B cell (primary cell): ENCODE measurements at regions of chr16 and their contacts with region 1.

Region 1: GRCh38 chr16:30378236-30379204 is 3.8 kb downstream of the SEPTIN1 start:
- DNase-seq: peak; percentile 99
- ATAC-seq: peak; percentile 85
- H3K4me3 ChIP-seq: peak overlapping the region; percentile 42 to 87 (median 68)
- H3K4me3 Mint-ChIP-seq: peak overlapping the region; percentile 94
- H3K27ac ChIP-seq: peak overlapping the region; percentile 97 to 100
- H3K27ac Mint-ChIP-seq: peak overlapping the region; percentile 100
- H3K4me1 ChIP-seq: peaks cover 34 to 64% of the 10 kb centered on the region in 2 donors
- H3K4me1 Mint-ChIP-seq: peaks cover 50% of the 10 kb centered on the region
- H3K27me3 ChIP-seq: no peaks in the 10 kb centered on the region
- H3K27me3 Mint-ChIP-seq: no peaks in the 10 kb centered on the region
- CTCF ChIP-seq: no peak

Region 2: GRCh38 chr16:28524681-28525171 is 1853.8 kb before region 1 on chr16:
- CTCF ChIA-PET with region 1: no interaction called
- POLR2A ChIA-PET with region 1: interaction called, 10 read pairs
- intact Hi-C with region 1: no loop called
- DNase-seq: no peak
- ATAC-seq: no peak
- H3K4me3 ChIP-seq: no peak overlapping the region
- H3K4me3 Mint-ChIP-seq: no peak overlapping the region
- H3K27ac ChIP-seq: no peak overlapping the region
- H3K27ac Mint-ChIP-seq: no peak overlapping the region
- H3K4me1 ChIP-seq: no peaks in the 10 kb centered on the region
- H3K4me1 Mint-ChIP-seq: peaks cover 7% of the 10 kb centered on the region
- H3K27me3 ChIP-seq: no peaks in the 10 kb centered on the region
- H3K27me3 Mint-ChIP-seq: peaks cover 8% of the 10 kb centered on the region
- CTCF ChIP-seq: no peak

Region 3: DNA sequence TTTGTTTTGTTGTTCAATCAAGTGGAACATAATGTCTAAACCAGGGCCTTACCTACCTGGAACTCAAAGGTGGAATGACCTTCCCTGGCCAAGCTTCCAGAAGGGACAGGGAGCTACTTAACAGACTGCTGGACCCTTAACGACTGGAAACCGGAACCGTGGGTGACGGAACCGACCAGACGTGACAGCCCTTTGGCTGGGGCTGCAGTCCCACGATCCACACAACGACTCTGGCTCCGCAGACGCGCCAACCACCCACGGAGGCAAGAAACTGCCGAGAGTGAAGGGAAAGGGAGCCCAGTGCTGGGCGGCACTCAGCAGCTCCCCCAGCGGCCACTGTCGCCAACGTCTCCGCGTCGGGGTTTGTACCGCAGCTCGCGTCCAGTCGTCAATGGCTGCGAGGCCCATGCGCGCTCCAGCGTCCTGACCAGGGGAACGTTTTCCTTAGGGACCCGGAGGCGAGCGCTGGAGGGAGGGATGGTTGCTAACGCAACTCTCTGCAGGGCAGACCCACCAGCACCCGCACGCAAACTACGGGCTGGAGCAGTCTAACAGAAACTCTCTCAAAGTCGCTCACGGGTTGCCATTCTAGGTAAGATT is 593.5 kb before region 1 on chr16:
- CTCF ChIA-PET with region 1: no interaction called
- POLR2A ChIA-PET with region 1: no interaction called
- intact Hi-C with region 1: no loop called
- DNase-seq: peak; percentile 78
- ATAC-seq: peak; percentile 95
- H3K4me3 ChIP-seq: peak overlapping the region in 4 of 5 experiments; percentile 4 to 49 (median 25)
- H3K4me3 Mint-ChIP-seq: peak overlapping the region; percentile 81
- H3K27ac ChIP-seq: no peak overlapping the region
- H3K27ac Mint-ChIP-seq: peak overlapping the region; percentile 50
- H3K4me1 ChIP-seq: peaks cover 13 to 23% of the 10 kb centered on the region in 2 donors
- H3K4me1 Mint-ChIP-seq: peaks cover 15% of the 10 kb centered on the region
- H3K27me3 ChIP-seq: no peaks in the 10 kb centered on the region
- H3K27me3 Mint-ChIP-seq: no peaks in the 10 kb centered on the region
- CTCF ChIP-seq: peak; percentile 81

Region 4: GRCh38 chr16:30149250-30149930 is 229.1 kb before region 1 on chr16:
- CTCF ChIA-PET with region 1: no interaction called
- POLR2A ChIA-PET with region 1: no interaction called
- intact Hi-C with region 1: no loop called
- DNase-seq: no peak
- ATAC-seq: no peak
- H3K4me3 ChIP-seq: no peak overlapping the region
- H3K4me3 Mint-ChIP-seq: no peak overlapping the region
- H3K27ac ChIP-seq: no peak overlapping the region
- H3K27ac Mint-ChIP-seq: no peak overlapping the region
- H3K4me1 ChIP-seq: no peaks in the 10 kb centered on the region
- H3K4me1 Mint-ChIP-seq: peaks cover 6% of the 10 kb centered on the region
- H3K27me3 ChIP-seq: no peaks in the 10 kb centered on the region
- H3K27me3 Mint-ChIP-seq: no peaks in the 10 kb centered on the region
- CTCF ChIP-seq: no peak

Region 5: GRCh38 chr16:30335598-30336474 is 42.7 kb before region 1 on chr16:
- CTCF ChIA-PET with region 1: no interaction called
- POLR2A ChIA-PET with region 1: interaction called, 3 read pairs
- intact Hi-C with region 1: loop called (anchors 1 kb)
- DNase-seq: peak; percentile 80
- ATAC-seq: no peak
- H3K4me3 ChIP-seq: peak overlapping the region in 4 of 5 experiments; percentile 62 to 73 (median 68)
- H3K4me3 Mint-ChIP-seq: peak overlapping the region; percentile 85
- H3K27ac ChIP-seq: peak overlapping the region; percentile 59 to 76
- H3K27ac Mint-ChIP-seq: peak overlapping the region; percentile 91
- H3K4me1 ChIP-seq: peaks cover 16 to 23% of the 10 kb centered on the region in 2 donors
- H3K4me1 Mint-ChIP-seq: peaks cover 28% of the 10 kb centered on the region
- H3K27me3 ChIP-seq: no peaks in the 10 kb centered on the region
- H3K27me3 Mint-ChIP-seq: no peaks in the 10 kb centered on the region
- CTCF ChIP-seq: no peak

Region 6: GRCh38 chr16:30355144-30355894 is 23.2 kb before region 1 on chr16 and contains the start of gene CD2BP2:
- CTCF ChIA-PET with region 1: no interaction called
- POLR2A ChIA-PET with region 1: interaction called, 3 read pairs
- intact Hi-C with region 1: loop called (anchors 1 kb)
- DNase-seq: peak; percentile 95
- ATAC-seq: peak; percentile 88
- H3K4me3 ChIP-seq: peak within 1 kb of the TSS; percentile 82 to 99 (median 92)
- H3K4me3 Mint-ChIP-seq: peak within 1 kb of the TSS; percentile 92
- H3K27ac ChIP-seq: peak within 1 kb of the TSS; percentile 84 to 94
- H3K27ac Mint-ChIP-seq: peak within 1 kb of the TSS; percentile 95
- H3K4me1 ChIP-seq: peaks cover 20 to 34% of the 10 kb centered on the region in 2 donors
- H3K4me1 Mint-ChIP-seq: peaks cover 42% of the 10 kb centered on the region
- H3K27me3 ChIP-seq: no peaks in the 10 kb centered on the region
- H3K27me3 Mint-ChIP-seq: no peaks in the 10 kb centered on the region
- CTCF ChIP-seq: no peak
- total RNA-seq, gene CD2BP2: 80.1 and 82.0 TPM in 2 replicates

Region 7: GRCh38 chr16:30395155-30395991 is 16.9 kb after region 1 on chr16 and contains the start of gene ZNF48:
- CTCF ChIA-PET with region 1: interaction called, 6 read pairs
- POLR2A ChIA-PET with region 1: interaction called, 51 read pairs
- intact Hi-C with region 1: loop called (anchors 1 kb)
- DNase-seq: peak; percentile 87
- ATAC-seq: peak; percentile 95
- H3K4me3 ChIP-seq: peak within 1 kb of the TSS; percentile 32 to 75 (median 66)
- H3K4me3 Mint-ChIP-seq: peak within 1 kb of the TSS; percentile 92
- H3K27ac ChIP-seq: peak within 1 kb of the TSS in 1 of 2 donors; percentile 64
- H3K27ac Mint-ChIP-seq: peak within 1 kb of the TSS; percentile 91
- H3K4me1 ChIP-seq: peaks cover 13 to 31% of the 10 kb centered on the region in 2 donors
- H3K4me1 Mint-ChIP-seq: peaks cover 23% of the 10 kb centered on the region
- H3K27me3 ChIP-seq: no peaks in the 10 kb centered on the region
- H3K27me3 Mint-ChIP-seq: no peaks in the 10 kb centered on the region
- CTCF ChIP-seq: peak; percentile 26
- total RNA-seq, gene ZNF48: 13.3 and 14.2 TPM in 2 replicates

Region 8: DNA sequence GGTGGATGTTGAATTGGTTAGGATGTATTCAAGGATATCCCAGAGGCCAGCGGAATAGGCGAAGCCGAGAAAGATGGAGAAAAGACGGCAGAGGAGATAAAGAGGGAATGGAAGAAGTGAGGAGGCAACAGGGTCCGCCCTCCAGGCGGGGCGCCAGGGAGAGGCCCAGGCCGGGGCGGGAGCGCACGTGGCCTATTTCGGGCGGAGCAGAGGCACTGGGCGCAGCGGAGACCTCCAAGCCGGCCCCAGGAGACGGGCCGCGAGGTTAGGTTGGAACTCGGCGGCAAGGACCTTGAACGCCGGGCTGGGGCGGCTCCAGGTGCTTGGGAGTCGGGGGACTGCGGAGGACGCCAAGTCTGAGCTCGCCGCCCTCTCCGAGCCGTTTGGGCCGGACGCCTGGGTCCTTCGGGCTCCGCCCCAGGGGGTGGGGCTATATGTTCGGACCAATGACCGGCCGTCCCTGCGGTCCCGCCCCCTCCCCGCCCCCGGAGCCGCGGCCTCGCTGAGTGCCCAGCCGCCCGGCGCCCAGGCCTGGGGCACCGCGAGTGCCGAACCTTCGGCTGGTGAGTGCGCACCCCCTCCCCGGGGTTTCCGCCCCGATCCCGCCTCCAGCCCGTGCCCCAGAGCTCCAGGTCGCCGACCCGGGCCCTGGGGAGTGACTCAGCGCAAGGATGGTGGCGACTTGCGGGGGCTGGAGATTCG is 28.7 kb after region 1 on chr16 and contains the start of gene ZNF771:
- CTCF ChIA-PET with region 1: interaction called, 37 read pairs
- POLR2A ChIA-PET with region 1: interaction called, 10 read pairs
- intact Hi-C with region 1: loop called (anchors 1 kb)
- DNase-seq: peak; percentile 94
- ATAC-seq: peak; percentile 91
- H3K4me3 ChIP-seq: peak within 1 kb of the TSS; percentile 42 to 76 (median 66)
- H3K4me3 Mint-ChIP-seq: peak within 1 kb of the TSS; percentile 98
- H3K27ac ChIP-seq: peak within 1 kb of the TSS; percentile 42 to 57
- H3K27ac Mint-ChIP-seq: peak within 1 kb of the TSS; percentile 96
- H3K4me1 ChIP-seq: peaks cover 15 to 23% of the 10 kb centered on the region in 2 donors
- H3K4me1 Mint-ChIP-seq: peaks cover 21% of the 10 kb centered on the region
- H3K27me3 ChIP-seq: no peaks in the 10 kb centered on the region
- H3K27me3 Mint-ChIP-seq: peaks cover 3% of the 10 kb centered on the region
- CTCF ChIP-seq: no peak
- total RNA-seq, gene ZNF771: 6.6 and 8.3 TPM in 2 replicates

Region 9: GRCh38 chr16:30472328-30472942 is 93.9 kb after region 1 on chr16 and contains the start of gene ITGAL:
- CTCF ChIA-PET with region 1: no interaction called
- POLR2A ChIA-PET with region 1: no interaction called
- intact Hi-C with region 1: loop called (anchors 5 kb)
- DNase-seq: peak; percentile 83
- ATAC-seq: peak; percentile 69
- H3K4me3 ChIP-seq: peak within 1 kb of the TSS; percentile 39 to 76 (median 59)
- H3K4me3 Mint-ChIP-seq: peak within 1 kb of the TSS; percentile 83
- H3K27ac ChIP-seq: peak within 1 kb of the TSS; percentile 70 to 82
- H3K27ac Mint-ChIP-seq: peak within 1 kb of the TSS; percentile 91
- H3K4me1 ChIP-seq: peaks cover 42 to 48% of the 10 kb centered on the region in 2 donors
- H3K4me1 Mint-ChIP-seq: peaks cover 47% of the 10 kb centered on the region
- H3K27me3 ChIP-seq: no peaks in the 10 kb centered on the region
- H3K27me3 Mint-ChIP-seq: no peaks in the 10 kb centered on the region
- CTCF ChIP-seq: no peak
- total RNA-seq, gene ITGAL: 176 and 184 TPM in 2 replicates